Common myeloid progenitor, CD34-positive (primary cell): ENCODE measurements at regions of chr4 and their contacts with region 1.

Region 1: GRCh38 chr4:76179398-76180318 is 31.5 kb upstream of the NUP54 start:
- DNase-seq: peak; percentile 83 to 93 (median 89)
- H3K4me3 ChIP-seq: no peak overlapping the region
- H3K27ac ChIP-seq: no peak overlapping the region
- H3K4me1 ChIP-seq: peaks cover 0 to 3% (median 0%) of the 10 kb centered on the region in 4 experiments
- H3K27me3 ChIP-seq: no peaks in the 10 kb centered on the region

Region 2: GRCh38 chr4:76198411-76199237 is 19.0 kb after region 1 on chr4:
- CTCF ChIA-PET with region 1: interaction called, 31 read pairs
- POLR2A ChIA-PET with region 1: no interaction called
- DNase-seq: peak; percentile 82 to 96 (median 95)
- H3K4me3 ChIP-seq: peak overlapping the region in 4 of 7 experiments; percentile 28 to 53 (median 30)
- H3K27ac ChIP-seq: peak overlapping the region; percentile 47 to 73
- H3K4me1 ChIP-seq: peaks cover 31 to 58% (median 50%) of the 10 kb centered on the region in 4 experiments
- H3K27me3 ChIP-seq: no peaks in the 10 kb centered on the region

Region 3: DNA sequence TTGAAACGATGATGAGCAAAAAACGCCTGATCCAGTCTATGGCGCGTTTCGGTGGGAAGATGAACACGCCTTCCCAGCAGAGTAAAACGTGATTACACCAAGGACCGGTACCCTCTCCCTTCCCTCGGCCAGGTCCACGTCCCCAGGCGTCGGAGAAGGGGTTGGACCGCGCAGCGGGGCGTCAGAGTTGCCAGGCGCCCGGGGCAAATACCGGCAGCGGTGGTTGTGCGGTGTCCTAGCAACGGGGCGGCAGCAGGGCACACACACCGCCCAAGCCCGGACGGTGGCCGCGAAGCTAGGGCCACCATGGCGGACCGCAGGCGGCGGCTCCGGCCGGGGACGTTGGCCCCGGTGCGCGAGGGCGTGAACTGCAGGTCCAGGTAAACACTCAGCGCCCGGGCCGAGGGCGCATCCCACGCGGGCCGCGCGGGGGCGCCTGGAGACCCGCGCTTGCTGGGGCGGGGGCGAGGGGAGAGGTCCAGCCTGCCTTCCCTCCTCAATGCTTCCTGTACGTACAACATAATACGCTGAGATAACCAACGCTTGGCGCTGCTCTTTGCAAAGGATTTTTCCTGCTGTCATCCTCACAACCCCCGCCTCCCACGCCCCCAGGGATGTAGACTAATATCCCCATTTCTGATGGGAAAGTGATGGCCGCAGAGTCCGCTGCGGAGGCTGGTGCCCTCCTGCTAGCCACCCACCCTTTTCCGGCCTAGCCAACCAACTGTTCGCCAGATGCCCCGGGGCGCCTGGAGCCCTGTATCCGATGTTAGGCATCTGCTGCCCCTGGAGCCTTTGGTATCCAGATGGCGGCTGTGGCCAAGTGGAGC is 72.0 kb after region 1 on chr4 and contains the start of gene FAM47E:
- CTCF ChIA-PET with region 1: interaction called, 13 read pairs
- POLR2A ChIA-PET with region 1: no interaction called
- DNase-seq: peak; percentile 56 to 89 (median 85)
- H3K4me3 ChIP-seq: peak within 1 kb of the TSS; percentile 23 to 79 (median 71)
- H3K27ac ChIP-seq: no peak within 1 kb of the TSS
- H3K4me1 ChIP-seq: peaks cover 0 to 28% (median 20%) of the 10 kb centered on the region in 4 experiments
- H3K27me3 ChIP-seq: peaks cover 0 to 16% (median 3%) of the 10 kb centered on the region in 5 experiments

Region 4: DNA sequence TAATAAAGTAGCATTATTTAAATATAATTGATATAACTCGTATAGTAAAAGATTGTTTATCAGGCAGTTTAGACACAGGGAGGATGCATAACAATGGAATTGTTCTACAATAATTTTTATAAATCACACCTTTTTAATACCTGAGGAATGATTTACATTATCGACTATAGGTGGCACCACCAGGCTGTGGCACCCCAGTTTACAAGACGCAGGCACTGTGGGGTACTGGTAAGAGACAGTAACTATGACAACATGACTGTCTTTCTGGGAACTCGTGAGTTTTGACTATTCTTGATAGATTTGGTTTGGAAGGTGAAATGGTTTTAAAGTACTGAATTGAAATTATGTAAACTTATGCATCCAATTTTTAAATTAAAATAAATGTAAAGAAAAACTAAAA is 99.8 kb after region 1 on chr4:
- CTCF ChIA-PET with region 1: interaction called, 23 read pairs
- POLR2A ChIA-PET with region 1: no interaction called
- DNase-seq: peak; percentile 28 to 36 (median 36)
- H3K4me3 ChIP-seq: no peak overlapping the region
- H3K27ac ChIP-seq: no peak overlapping the region
- H3K4me1 ChIP-seq: peaks cover 0 to 4% (median 0%) of the 10 kb centered on the region in 4 experiments
- H3K27me3 ChIP-seq: no peaks in the 10 kb centered on the region

Region 5: GRCh38 chr4:76377911-76378310 is 198.3 kb after region 1 on chr4:
- CTCF ChIA-PET with region 1: interaction called, 186 read pairs
- POLR2A ChIA-PET with region 1: no interaction called
- DNase-seq: peak; percentile 37 to 65 (median 60)
- H3K4me3 ChIP-seq: no peak overlapping the region
- H3K27ac ChIP-seq: no peak overlapping the region
- H3K4me1 ChIP-seq: peaks cover 0 to 5% (median 1%) of the 10 kb centered on the region in 4 experiments
- H3K27me3 ChIP-seq: no peaks in the 10 kb centered on the region

Region 6: DNA sequence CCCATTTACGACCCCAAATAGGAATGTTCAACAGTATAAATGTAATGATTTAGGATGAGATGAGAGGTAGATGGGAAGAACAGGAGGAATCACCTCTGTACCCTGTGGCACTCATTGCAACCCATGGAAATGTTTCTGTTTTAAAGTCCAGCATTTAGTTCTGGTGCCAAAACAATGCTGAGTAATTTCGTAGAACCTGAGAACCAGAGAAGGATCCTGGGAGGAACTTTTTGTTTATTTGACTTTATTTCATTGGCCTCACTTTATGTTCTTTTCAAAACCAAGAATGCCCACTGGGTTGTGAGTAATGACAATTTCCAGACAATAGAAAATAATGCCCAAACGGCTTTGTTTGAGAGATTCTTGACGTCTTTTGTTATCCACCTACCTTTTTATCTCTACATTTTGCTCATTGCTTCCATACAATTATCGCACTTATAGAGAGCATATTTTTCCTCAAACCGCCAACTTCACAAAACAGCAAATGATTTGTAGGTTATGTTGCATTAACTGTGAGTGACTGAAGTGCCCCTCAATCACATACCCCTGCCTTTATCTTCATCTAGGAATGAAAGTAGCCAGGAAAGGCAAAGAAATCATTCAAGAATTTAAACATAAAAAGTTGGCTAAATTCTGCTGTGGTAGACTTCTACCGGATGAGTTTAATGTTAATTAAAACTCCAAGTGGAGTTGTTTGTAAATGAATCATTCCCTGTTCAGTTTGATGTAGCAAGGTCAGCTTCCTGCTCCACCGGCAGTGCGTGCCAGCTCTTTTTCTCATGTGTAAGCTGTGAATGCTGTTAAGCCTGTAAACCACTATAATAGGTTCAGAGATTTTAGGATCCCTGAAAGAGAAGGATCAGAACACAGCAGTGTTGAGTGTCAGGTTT is 366.9 kb after region 1 on chr4:
- CTCF ChIA-PET with region 1: no interaction called
- POLR2A ChIA-PET with region 1: no interaction called
- DNase-seq: peak in 1 of 3 donors; percentile 22
- H3K4me3 ChIP-seq: no peak overlapping the region
- H3K27ac ChIP-seq: no peak overlapping the region
- H3K4me1 ChIP-seq: peaks cover 10 to 38% (median 29%) of the 10 kb centered on the region in 4 experiments
- H3K27me3 ChIP-seq: no peaks in the 10 kb centered on the region